Heart left ventricle (tissue), 16 donors: ENCODE measurements at regions of chr1 and their contacts with region 1.

Region 1: DNA sequence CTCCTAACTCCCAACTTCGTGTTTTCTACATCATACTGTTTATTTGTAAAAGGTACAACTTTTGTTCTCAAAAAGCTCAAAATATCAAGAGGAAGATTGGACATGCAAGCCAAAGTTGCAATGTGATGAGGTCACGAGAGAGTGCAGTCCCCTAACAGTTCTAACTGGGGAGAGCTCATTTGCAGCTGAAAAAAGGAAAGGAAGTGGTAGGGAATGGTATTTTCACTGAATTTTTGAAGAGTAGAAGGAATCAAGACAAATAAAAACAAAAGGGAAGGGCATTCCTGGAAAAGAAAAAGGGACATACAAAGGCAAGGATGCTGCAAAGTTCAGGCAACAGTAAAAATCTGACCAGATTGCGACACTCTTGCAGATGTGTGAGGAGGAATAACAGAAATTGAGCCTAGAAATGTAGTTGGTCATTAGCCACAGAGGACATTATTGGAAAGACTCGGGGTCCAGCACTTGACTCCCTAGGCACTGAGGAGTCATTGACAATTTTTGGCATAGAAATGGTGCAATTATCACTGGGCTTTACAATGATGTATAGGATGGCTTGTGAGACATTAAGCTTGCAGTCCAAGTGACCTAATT is 67.9 kb downstream of the TBX15 start:
- DNase-seq: no peak
- ATAC-seq: no peak
- H3K4me3 ChIP-seq: no peak overlapping the region
- H3K27ac ChIP-seq: no peak overlapping the region
- H3K4me1 ChIP-seq: no peaks in the 10 kb centered on the region
- H3K27me3 ChIP-seq: no peaks in the 10 kb centered on the region
- CTCF ChIP-seq: no peak
- POLR2A ChIP-seq: no peak

Region 2: GRCh38 chr1:118881751-118882150 is 38.5 kb before region 1 on chr1:
- intact Hi-C with region 1: no loop called
- DNase-seq: no peak
- ATAC-seq: no peak
- H3K4me3 ChIP-seq: no peak overlapping the region
- H3K27ac ChIP-seq: no peak overlapping the region
- H3K4me1 ChIP-seq: no peaks in the 10 kb centered on the region
- H3K27me3 ChIP-seq: no peaks in the 10 kb centered on the region
- CTCF ChIP-seq: no peak
- POLR2A ChIP-seq: no peak

Region 3: DNA sequence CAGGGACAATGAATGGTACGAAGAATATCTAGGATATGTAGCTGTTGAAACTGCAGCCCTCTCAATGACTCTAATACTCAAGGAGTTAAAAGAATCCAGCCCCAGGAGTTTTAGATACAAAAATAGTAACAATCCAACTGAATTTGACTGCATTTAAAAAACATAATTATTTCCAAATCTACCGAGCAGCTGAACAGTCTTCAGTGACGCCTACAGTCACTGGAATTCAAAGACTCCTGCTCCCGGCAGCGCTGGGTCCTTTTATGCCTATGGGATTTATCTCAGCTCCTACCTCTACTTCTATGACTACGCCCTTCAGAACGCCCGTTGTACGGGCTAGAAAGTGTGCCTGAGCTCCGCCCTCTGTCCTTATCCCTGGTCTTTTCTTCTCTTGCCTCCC is 164.6 kb after region 1 on chr1:
- intact Hi-C with region 1: loop called in 1 of 10 experiments (anchors 5 kb)
- DNase-seq: no peak
- ATAC-seq: peak in 3 of 4 donors; percentile 43 to 53 (median 44)
- H3K4me3 ChIP-seq: peak overlapping the region in 4 of 12 donors; percentile 14 to 37 (median 21)
- H3K27ac ChIP-seq: peak overlapping the region in 5 of 12 donors; percentile 12 to 60 (median 25)
- H3K4me1 ChIP-seq: peaks cover 0 to 28% (median 6%) of the 10 kb centered on the region in 12 donors
- H3K27me3 ChIP-seq: no peaks in the 10 kb centered on the region
- CTCF ChIP-seq: peak in 1 of 12 donors; percentile 12
- POLR2A ChIP-seq: no peak